Activated CD4-positive, alpha-beta memory T cell treated with anti-CD3 and anti-CD28 coated beads for 36 hours (primary cell): ENCODE measurements at regions of chr1 and their contacts with region 1.

Region 1: DNA sequence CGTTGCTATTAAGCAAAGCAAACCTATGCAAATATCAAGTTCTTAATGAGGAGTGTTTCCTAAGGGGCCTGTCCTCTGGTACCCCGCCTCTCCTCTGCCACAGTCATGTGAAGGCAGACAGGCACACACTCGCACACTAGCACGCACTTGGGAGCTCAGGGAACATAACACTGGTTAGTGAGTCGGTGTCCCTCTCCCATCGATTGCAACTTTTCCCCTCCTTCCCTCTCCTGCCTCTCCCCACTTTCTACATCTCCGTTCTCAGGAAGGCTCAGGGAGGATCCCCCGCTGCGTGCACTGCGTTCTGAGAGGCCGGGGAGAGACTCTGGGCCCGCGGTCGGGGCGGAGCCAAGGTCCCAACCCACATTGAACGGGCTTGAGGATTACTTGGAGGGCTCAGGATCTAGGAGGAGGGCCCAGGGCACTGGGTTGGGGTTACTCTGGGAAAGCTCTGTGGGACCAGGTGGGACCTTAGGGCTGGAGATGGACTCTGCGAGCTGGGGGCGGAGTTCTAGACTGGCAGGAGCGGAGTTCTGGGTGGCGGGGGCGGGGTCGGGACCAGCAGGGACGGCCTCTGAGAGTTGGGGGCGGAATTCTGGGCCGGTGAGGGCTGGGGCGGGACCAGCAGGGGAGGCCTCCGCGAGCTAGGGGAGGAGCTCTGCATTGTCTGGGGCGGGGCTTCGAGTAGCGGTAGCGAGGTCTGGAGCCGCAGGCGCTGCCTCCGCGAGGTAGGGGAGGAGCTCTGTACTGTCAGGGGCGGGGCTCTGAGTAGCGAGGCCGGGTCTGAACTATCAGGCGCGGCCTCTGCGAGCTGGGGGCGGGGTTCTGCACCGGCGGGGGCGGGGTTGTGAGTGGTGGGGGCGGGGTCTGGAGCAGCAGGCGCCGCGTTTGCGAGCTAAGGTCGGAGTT is 533 bp upstream of the LEPR start:
- DNase-seq: peak; percentile 99
- H3K4me3 Mint-ChIP-seq: peak overlapping the region; percentile 90
- H3K27ac Mint-ChIP-seq: peak overlapping the region; percentile 88
- H3K4me1 Mint-ChIP-seq: peaks cover 21% of the 10 kb centered on the region
- H3K27me3 Mint-ChIP-seq: no peaks in the 10 kb centered on the region

Region 2: GRCh38 chr1:64966158-64966971 is 453.6 kb before region 1 on chr1 and contains the start of gene JAK1:
- CTCF ChIA-PET with region 1: no interaction called
- POLR2A ChIA-PET with region 1: no interaction called
- intact Hi-C with region 1: loop called (anchors 2 kb)
- DNase-seq: peak; percentile 89
- H3K4me3 Mint-ChIP-seq: peak within 1 kb of the TSS; percentile 91
- H3K27ac Mint-ChIP-seq: peak within 1 kb of the TSS; percentile 72
- H3K4me1 Mint-ChIP-seq: peaks cover 48% of the 10 kb centered on the region
- H3K27me3 Mint-ChIP-seq: no peaks in the 10 kb centered on the region
- total RNA-seq, gene JAK1: 115 to 128 TPM

Region 3: DNA sequence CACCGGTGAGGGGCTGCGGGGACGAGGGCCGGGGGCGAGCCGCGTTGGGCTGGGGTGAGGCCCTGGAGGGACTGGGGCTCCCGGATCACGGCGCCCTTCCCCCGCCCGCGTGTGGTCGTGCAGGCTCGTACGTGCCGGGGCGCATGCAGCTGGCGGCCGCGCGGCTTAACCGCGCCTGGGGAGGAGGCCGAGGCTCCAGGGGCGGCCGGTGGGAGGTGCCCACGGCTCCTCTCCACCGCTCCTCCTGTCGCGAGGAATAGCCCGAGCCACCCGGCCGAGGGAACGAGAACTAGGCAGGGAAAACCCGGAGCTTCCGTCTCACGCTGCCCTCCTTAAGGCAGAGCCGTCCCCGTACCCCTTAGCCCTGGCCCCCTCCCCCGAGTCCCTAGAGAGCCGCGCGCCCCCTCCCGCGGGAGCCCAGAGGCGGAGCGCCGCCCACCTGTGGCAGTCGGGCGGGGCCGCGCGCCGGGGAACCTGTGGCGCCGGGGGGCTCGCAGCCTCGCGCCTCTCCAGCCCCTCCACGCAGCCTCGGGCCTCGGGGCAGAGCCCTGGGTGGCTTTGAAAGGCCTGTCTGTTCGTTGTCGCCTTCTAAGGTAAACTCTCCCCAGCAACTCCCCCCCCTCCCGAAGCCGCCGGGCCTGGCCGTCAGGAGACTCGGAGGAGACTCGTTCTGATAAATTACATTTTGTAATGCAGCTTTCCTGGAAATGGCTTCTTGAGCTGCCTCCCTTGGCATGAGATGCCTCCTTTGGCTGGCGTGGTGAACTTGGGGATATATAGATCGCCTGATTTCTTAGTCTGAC is 271.2 kb before region 1 on chr1:
- CTCF ChIA-PET with region 1: no interaction called
- POLR2A ChIA-PET with region 1: no interaction called
- intact Hi-C with region 1: loop called (anchors 2 kb)
- DNase-seq: peak; percentile 65
- H3K4me3 Mint-ChIP-seq: peak overlapping the region; percentile 76
- H3K27ac Mint-ChIP-seq: no peak overlapping the region
- H3K4me1 Mint-ChIP-seq: peaks cover 14% of the 10 kb centered on the region
- H3K27me3 Mint-ChIP-seq: peaks cover 31% of the 10 kb centered on the region

Region 4: DNA sequence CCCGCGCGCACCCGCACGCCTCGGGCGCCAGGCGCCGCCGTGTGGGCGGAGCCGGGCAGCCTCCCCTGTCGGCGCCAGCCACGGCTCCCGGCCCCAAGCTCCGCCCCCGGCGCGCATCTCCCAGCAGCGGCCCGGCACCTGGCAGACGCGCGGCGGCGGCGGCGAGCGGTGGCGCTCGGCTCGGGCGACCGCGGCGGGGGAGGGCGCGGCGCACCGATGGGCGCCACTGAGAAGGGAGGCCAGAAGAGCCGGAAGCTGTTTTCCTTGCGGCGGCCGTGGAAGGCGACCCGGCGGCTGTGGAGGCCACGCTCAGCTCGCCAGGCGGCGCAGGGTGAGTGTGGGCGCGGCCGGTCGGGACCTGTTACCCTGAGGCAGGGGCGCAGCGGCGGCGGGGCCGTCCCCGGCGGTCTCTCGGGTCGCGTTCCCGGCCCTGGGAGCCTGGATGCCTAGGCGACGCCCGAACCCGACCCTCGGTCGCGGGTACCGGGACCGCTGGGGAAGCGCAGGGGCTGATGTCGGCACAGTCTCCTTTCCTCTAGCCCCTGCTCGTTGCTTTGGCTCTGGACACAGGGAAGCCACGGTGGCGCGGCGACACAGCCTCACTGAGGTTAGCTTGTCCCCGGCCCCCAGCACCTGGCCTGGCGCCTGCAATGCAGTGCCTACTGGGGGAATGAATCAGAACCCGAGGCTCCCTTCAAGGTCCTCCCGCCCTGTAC is 165.5 kb before region 1 on chr1:
- CTCF ChIA-PET with region 1: interaction called, 9 read pairs
- POLR2A ChIA-PET with region 1: interaction called, 4 read pairs
- intact Hi-C with region 1: loop called (anchors 1 kb)
- DNase-seq: peak; percentile 89
- H3K4me3 Mint-ChIP-seq: peak overlapping the region; percentile 84
- H3K27ac Mint-ChIP-seq: no peak overlapping the region
- H3K4me1 Mint-ChIP-seq: peaks cover 16% of the 10 kb centered on the region
- H3K27me3 Mint-ChIP-seq: peaks cover 10% of the 10 kb centered on the region

Region 5: GRCh38 chr1:65260946-65261411 is 159.0 kb before region 1 on chr1:
- CTCF ChIA-PET with region 1: no interaction called
- POLR2A ChIA-PET with region 1: no interaction called
- intact Hi-C with region 1: loop called (anchors 2 kb)
- DNase-seq: peak; percentile 32
- H3K4me3 Mint-ChIP-seq: no peak overlapping the region
- H3K27ac Mint-ChIP-seq: peak overlapping the region; percentile 57
- H3K4me1 Mint-ChIP-seq: peaks cover 31% of the 10 kb centered on the region
- H3K27me3 Mint-ChIP-seq: peaks cover 8% of the 10 kb centered on the region

Region 6: DNA sequence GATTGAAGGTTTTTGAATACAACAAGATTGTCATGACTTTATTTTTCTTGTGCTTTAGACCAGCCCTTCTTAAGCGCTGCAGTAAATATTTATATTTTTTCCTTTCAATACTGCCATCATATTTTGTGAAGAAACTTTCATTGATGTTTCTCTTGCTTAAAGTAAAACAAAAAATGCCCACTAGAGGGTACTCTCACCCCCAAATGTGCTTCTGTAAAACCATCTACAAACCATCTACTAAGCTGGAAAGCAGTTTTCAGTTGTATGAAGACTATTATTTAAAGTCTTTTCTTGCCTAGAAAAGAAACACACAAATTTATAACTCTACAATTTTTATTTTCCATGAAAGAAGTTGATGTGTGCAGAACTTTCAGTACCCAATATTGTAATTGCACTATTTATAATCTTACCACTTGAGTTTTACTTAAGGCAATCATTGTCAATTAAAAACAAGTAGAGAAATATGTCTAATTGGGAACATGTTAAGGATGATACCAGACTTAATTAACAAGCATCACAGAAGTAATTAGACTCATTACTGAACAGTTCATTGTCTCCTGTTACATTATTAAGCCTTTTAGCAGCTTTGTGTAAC is 11.3 kb after region 1 on chr1:
- CTCF ChIA-PET with region 1: interaction called, 28 read pairs
- POLR2A ChIA-PET with region 1: no interaction called
- intact Hi-C with region 1: no loop called
- DNase-seq: no peak
- H3K4me3 Mint-ChIP-seq: no peak overlapping the region
- H3K27ac Mint-ChIP-seq: no peak overlapping the region
- H3K4me1 Mint-ChIP-seq: peaks cover 5% of the 10 kb centered on the region
- H3K27me3 Mint-ChIP-seq: no peaks in the 10 kb centered on the region

Region 7: DNA sequence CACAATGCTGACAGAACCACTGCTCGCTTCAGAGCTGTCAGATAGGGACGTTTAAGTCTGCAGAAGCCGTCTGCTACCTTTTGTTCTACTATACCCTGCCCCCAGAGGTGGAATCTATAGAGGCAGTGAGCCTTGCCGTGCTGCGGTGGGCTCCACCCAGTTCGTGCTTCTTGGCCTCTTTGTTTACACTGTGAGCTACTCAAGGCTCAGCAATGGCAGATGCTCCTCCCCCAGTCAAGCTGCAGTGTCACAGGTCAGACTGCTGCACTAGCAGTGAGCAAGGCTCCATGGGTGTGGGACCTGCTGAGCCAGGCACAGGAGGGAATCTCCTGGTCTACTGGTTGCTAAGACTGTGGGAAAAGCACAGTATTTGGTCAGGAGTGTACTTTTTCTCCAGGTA is 47.6 kb after region 1 on chr1:
- CTCF ChIA-PET with region 1: no interaction called
- POLR2A ChIA-PET with region 1: no interaction called
- intact Hi-C with region 1: no loop called
- DNase-seq: no peak
- H3K4me3 Mint-ChIP-seq: no peak overlapping the region
- H3K27ac Mint-ChIP-seq: no peak overlapping the region
- H3K4me1 Mint-ChIP-seq: no peaks in the 10 kb centered on the region
- H3K27me3 Mint-ChIP-seq: no peaks in the 10 kb centered on the region

Region 8: DNA sequence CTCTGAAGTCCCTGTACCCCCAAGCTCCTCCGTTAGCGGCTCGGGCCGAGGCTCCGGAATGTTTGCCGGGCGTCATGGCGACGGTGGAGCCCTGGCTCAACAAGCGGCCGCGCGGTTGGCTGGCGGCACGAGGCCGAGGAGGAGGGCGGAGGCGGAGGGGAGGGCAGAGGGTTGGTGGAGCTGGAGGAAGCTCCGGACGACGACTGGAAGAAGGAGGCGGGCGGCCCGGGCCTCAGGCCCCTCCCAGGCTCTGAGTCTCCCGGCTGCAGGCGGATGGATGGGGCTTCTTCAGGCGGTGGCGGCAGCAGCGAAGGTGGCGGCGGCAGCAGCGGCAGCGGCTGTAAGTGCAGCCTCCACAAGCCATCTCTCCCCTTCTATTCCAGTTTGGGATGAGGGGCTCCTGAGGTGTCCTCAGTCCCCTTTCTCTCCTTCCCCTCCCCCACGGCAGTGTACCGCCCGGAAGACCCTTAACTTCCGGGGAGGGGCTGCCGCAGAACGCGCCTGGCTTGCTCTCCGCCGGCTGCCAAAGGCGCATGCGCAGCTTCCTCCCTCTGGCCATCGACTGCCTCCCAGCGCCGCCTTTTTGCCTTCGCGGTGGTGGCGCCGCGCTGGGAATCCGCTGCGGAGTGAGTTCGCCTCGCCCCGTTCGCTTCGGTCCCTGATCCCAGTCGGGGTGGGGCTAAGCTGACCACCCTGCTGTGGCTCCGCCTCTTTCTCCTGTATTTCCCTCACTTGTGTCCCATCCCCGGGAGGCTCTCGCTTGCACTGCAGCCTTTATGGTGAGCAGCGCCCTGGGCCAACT is 1505.0 kb after region 1 on chr1 and contains the starts of genes DNAI4 and MIER1:
- CTCF ChIA-PET with region 1: no interaction called
- POLR2A ChIA-PET with region 1: no interaction called
- intact Hi-C with region 1: loop called (anchors 2 kb)
- DNase-seq: peak; percentile 99
- H3K4me3 Mint-ChIP-seq: peak within 1 kb of the TSS; percentile 97
- H3K27ac Mint-ChIP-seq: peak within 1 kb of the TSS; percentile 96
- H3K4me1 Mint-ChIP-seq: peaks cover 53% of the 10 kb centered on the region
- H3K27me3 Mint-ChIP-seq: no peaks in the 10 kb centered on the region
- total RNA-seq, gene DNAI4: 1.4 to 1.6 TPM
- total RNA-seq, gene MIER1: 54.7 to 58.8 TPM